Dorsolateral prefrontal cortex (tissue), 120 donors: ENCODE measurements at regions of chr6 and their contacts with region 1.

Region 1: DNA sequence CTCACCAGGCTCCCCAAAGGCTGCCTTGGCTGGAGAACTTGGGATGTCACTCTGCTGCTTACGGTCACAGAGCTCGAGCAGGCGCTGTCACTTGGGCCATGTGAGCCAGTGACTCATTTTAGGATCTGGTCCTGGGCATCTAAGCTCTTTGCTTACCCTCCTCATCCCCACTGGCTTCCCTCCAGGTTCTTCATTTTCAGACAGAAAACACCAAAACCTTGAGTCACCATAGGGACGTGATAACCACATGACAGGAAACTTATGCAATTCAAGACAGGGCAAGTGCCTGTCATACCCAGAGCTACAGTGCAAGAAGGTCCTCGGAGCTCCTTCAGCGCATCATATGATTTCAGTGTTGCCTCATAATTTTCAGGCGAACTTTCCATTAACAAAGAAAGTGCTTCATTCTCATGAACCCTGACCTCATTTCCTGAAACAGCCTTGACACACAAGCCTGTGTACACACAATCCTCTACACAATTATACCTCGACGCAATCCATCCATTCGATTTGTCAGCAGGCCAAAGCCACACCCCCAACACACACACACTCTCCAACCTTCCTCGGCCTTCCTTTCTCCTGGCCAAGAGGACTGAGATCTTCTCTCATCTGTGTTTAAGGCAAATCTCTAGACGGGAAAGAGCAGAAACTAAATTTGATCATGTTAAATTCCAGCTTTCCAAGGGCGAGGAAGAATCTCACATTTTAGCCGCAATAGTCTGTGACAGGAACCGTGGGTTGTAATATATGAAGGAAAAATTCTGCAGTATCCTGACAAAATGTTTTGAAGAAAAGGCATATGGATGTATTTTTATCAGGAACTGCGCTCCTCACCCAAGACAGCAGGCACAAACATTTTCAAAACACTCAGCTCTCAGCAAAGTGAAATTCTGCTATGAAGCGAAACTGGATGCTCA is 25.3 kb downstream of the TBC1D7 start:
- DNase-seq: peak in 7 of 10 donors; percentile 35 to 80 (median 62)
- H3K4me3 ChIP-seq: peak overlapping the region in 52 of 59 donors; percentile 0 to 55 (median 26)
- H3K27ac ChIP-seq: peak overlapping the region; percentile 76 to 97 (median 91)
- H3K27me3 ChIP-seq: no peaks in the 10 kb centered on the region
- CTCF ChIP-seq: peak in 1 of 56 donors; percentile 4

Region 2: DNA sequence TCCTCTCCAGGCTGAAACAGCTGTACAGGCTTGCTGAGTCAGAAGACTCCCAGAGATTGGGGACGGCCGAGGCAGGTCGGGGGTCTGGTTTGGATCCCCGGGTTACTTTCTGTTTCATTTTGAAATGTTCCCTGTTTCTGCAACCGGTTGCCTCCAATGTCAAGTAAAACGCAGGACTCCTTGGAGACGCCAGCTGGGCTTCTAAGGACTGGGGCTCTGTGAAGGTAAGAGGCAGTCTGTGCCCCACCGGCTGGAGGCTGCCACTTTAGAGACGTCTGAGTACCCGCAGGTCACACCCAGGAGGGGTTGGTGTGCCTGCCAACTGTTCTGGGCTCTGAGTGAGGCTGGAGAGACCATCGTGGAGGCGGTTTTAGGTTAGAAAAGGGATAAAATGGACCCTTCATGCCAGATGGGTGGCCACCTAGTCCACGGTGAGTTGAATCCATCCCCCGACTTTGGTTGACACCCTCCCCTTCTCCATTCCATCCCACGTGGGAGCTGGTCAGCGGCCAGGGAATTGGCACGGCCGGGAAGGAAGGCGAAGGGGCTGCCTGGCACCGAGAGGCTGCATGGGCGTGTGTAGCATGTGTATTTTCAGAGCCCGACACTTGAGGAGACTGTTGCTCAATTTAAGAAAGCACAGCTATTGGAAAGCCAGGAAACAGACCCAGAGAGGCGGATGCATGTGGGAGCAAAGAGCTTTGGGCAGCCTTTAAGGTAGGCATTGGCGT is 345.5 kb before region 1 on chr6:
- intact Hi-C with region 1: loop called in 1 of 2 experiments (anchors 10 kb)
- DNase-seq: peak; percentile 26 to 82 (median 74)
- H3K4me3 ChIP-seq: peak overlapping the region; percentile 53 to 92 (median 75)
- H3K27ac ChIP-seq: peak overlapping the region; percentile 20 to 96 (median 87)
- H3K27me3 ChIP-seq: no peaks in the 10 kb centered on the region
- CTCF ChIP-seq: peak in 15 of 56 donors; percentile 4 to 40 (median 18)

Region 3: GRCh38 chr6:12992770-12993169 is 310.2 kb before region 1 on chr6:
- intact Hi-C with region 1: no loop called
- DNase-seq: no peak
- H3K4me3 ChIP-seq: no peak overlapping the region
- H3K27ac ChIP-seq: no peak overlapping the region
- H3K27me3 ChIP-seq: no peaks in the 10 kb centered on the region
- CTCF ChIP-seq: no peak

Region 4: GRCh38 chr6:13203145-13203544 is 99.9 kb before region 1 on chr6:
- intact Hi-C with region 1: no loop called
- DNase-seq: no peak
- H3K4me3 ChIP-seq: no peak overlapping the region
- H3K27ac ChIP-seq: peak overlapping the region in 6 of 59 donors; percentile 7 to 47 (median 23)
- H3K27me3 ChIP-seq: no peaks in the 10 kb centered on the region
- CTCF ChIP-seq: no peak

Region 5: GRCh38 chr6:13272131-13273046 is 30.6 kb before region 1 on chr6:
- intact Hi-C with region 1: loop called in 1 of 2 experiments (anchors 2 kb)
- DNase-seq: no peak
- H3K4me3 ChIP-seq: peak overlapping the region in 10 of 59 donors; percentile 5 to 42 (median 27)
- H3K27ac ChIP-seq: peak overlapping the region in 24 of 59 donors; percentile 3 to 65 (median 22)
- H3K27me3 ChIP-seq: no peaks in the 10 kb centered on the region
- CTCF ChIP-seq: no peak